GM18951 (cell line): ENCODE measurements at regions of chr1 and their contacts with region 1.

Region 1: GRCh38 chr1:157963713-157964112 is 29.7 kb upstream of the KIRREL1 start:
- POLR2A ChIP-seq: no peak

Region 2: DNA sequence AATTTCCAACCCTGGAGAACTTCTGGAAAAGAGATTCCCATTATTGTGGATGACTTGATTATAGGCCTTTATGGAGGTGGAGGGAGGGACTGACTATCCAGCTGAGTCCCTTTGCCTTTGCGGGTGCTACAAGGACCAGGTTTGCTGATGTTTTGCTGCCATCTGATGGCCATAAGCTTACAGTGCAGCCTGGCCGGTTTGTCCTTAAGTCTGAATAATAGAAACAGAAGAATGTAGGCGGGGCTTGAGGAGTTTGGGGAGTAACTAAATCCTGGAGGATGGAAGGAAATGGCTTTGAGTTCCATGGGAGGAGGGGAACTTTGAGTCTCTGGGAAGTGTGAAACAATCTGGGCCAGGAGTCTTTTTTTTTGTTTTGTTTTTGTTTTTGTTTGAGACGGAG is 161.3 kb after region 1 on chr1:
- in situ Hi-C with region 1: loop called (anchors 10 kb)
- POLR2A ChIP-seq: no peak

Region 3: GRCh38 chr1:158371188-158371953 is 407.7 kb after region 1 on chr1:
- in situ Hi-C with region 1: no loop called
- POLR2A ChIP-seq: no peak